ENCODE measurements at regions of chr5 and their contacts with region 1.

Region 1: DNA sequence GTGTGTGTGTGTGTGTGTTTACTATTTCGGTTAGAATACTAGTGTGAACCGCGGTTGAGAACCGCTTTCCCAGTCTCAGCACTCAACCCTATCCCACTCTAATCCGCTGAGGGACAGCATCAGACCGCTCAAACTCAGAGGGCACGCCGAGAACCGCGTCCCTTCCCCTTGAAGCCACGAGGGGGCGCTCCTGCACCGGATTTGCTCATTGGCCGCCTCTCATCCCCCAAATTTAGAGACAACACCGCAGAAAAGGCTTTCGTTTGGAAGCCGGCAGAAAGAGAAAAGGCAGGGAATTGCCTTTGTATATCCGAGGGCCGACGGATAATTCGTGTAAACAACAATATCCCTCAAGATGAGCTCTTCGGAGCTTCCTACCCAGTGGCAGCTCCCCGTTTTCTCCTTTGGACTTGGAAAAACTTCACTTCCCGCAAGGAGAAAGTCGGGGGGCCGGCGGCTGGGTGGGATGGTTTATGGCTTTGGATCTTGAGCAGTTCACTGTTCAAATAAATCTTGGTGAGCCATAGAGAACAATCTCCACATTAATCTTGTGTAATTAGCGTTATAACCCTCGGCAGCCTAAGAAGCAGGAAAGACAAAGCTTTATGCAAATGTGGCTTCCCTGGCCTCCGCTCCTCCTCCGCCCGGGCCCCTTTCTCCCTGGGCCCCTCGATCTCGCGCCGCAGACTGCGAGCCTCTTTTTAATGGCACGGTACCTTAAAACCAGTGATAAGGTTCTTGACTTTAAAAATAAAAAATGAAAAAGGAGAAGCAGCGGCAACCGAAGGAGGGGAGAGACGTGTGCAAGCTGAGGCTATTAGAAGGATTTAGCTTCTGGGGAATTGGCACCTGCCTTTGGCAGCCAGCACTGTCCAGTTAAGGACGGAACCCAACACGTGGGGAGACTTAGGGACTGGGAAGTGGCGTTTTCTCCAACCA is 296.8 kb downstream of the PARP8 start:
- DNase-seq: no peak
- H3K4me3 ChIP-seq: peak overlapping the region; percentile 49
- H3K27ac ChIP-seq: no peak overlapping the region
- H3K27me3 ChIP-seq: peaks cover 47% of the 10 kb centered on the region
- CTCF ChIP-seq: peak; percentile 95

Region 2: DNA sequence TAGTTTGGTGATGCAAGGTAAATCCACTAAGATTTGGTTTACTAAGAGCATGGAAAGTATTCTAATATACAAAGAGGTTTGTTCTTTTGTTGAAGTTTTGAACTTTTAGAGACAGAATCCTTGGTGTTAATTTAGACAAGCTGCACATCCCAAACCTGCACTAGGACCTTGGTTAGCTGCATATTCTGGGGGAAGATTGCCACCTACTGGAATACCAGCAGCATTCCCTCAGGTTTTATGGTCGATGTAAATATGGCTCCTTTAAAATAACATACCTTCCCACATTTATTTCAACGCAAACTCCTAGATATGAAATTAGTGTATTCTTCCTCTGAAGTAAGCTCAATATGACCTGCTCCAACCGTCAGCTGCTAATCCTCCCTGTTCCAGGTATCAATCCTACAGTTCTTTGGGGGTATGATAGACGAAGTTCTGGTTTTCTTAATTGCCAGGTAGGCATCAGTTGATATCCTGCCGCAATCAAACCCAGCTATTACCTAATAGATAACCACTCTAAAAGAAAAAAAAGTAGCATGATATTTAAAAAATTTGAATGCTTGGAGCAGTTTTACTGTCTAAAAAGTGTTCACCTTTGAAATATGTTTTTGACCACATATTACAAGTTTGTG is 1044.1 kb after region 1 on chr5:
- CTCF ChIA-PET with region 1: interaction called, 27 read pairs
- POLR2A ChIA-PET with region 1: no interaction called
- DNase-seq: no peak
- H3K4me3 ChIP-seq: no peak overlapping the region
- H3K27ac ChIP-seq: no peak overlapping the region
- H3K27me3 ChIP-seq: no peaks in the 10 kb centered on the region
- CTCF ChIP-seq: peak; percentile 62

Region 3: DNA sequence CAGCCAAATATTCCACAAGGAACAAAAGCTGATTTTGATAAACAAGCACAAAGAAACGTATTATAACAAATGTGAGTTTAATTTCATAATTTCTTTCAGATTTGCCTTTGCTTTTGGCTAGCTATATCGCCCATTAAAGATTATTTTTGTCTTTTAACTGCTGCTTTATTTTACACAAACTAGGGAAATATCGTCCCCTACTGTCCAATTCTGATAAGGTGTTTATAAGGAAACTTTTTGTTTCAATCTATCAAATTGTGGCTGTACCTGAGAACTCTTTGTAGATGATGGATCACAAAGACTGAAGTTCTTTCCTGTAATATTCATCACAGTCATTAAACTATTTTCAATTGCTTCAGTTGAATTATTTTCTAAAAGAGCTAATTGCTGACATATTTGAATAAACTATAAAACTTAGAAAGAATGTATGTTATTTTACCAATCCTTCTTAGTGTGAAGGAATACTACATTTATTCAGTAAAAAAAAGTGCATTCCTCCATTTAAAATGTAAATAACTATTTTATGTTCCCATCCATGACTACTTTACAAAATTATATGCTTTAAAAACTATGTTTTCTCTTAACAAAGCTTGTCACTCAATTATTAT is 1393.2 kb after region 1 on chr5:
- CTCF ChIA-PET with region 1: interaction called, 19 read pairs
- POLR2A ChIA-PET with region 1: no interaction called
- DNase-seq: no peak
- H3K4me3 ChIP-seq: no peak overlapping the region
- H3K27ac ChIP-seq: no peak overlapping the region
- H3K27me3 ChIP-seq: no peaks in the 10 kb centered on the region
- CTCF ChIP-seq: peak; percentile 74

Region 4: DNA sequence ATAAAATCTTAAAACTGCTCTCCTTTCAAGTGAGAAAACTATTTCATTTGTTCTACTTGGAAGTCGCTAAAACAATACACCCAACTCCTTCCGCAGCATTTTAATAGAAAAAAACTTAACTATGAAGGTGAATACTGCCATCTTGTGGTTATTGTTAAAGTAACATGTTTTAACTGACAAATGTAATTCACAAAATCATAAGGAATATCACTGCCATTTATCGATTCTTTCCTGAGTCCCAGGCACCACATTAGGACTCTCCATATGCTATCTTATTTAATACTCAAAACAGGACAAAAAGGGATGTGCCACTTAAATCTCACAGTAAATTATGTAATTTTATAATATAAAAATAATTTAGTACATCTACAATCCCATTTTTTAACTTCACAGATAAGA is 1694.0 kb after region 1 on chr5:
- CTCF ChIA-PET with region 1: interaction called, 36 read pairs
- POLR2A ChIA-PET with region 1: no interaction called
- DNase-seq: peak; percentile 15
- H3K4me3 ChIP-seq: no peak overlapping the region
- H3K27ac ChIP-seq: no peak overlapping the region
- H3K27me3 ChIP-seq: no peaks in the 10 kb centered on the region
- CTCF ChIP-seq: peak; percentile 51

Measured in AG04450 (cell line).